Activated T-helper 1 cell treated with anti-CD3 and anti-CD28 coated beads, Interleukin-12 subunit alpha, Interleukin-12 subunit beta, Interleukin-2, Interleukin-4 antibody, amounts not matched to agents 30 ng/mL and 10 ng/mL and 1 ng/mL, durations not matched to agents 14 hours and 24 hours and 36 hours (primary cell): ENCODE measurements at regions of chr16 and their contacts with region 1.

Region 1: DNA sequence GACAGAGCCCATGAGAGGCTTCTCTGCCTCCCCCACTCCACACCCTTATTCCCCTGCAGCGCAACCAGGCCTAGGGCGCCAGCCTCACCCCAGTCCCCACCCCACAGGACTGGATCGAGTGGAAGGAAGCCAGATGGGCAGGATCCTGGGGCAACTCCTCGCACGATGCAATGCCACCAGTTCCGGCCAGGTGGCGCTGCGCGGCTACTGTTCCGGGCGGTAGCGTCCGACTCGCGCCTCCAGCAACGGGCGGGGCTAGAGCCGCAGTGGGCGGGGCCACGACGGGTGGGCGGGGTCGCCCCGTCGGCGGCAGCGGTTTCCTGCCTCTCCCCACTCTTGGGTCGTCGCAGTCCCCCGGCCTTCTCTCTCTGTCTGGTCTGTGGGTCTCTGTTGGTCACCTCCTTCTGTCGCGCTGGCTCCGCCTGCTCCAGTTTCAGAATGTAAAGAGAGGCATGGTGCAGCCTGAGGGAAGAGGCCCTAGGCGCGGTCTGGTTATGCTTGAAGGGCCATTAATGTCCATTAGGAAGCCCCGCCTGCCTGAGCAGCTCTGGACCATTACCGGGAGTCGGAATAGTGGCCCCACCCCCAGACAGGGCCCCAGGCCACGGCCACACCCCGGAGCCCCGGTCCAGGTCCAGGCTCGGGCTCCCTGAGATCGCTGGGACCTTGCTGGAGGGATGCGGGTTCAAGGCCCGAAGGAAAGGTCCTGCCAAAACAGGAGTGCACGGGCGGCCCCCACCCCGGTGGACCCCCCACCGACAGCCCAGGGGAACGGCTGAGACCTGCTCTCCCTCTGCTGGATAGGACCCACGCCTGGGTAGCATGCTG is 3.4 kb upstream of the NHERF2 start:
- DNase-seq: peak; percentile 92
- H3K4me3 Mint-ChIP-seq: peak overlapping the region; percentile 77
- H3K27ac Mint-ChIP-seq: no peak overlapping the region
- H3K4me1 Mint-ChIP-seq: peaks cover 16% of the 10 kb centered on the region
- H3K27me3 Mint-ChIP-seq: peaks cover 37% of the 10 kb centered on the region

Region 2: GRCh38 chr16:1983544-1984346 is 39.6 kb before region 1 on chr16 and contains the start of gene GFER:
- intact Hi-C with region 1: loop called (anchors 5 kb)
- DNase-seq: peak; percentile 80
- H3K4me3 Mint-ChIP-seq: peak within 1 kb of the TSS; percentile 84
- H3K27ac Mint-ChIP-seq: peak within 1 kb of the TSS; percentile 29
- H3K4me1 Mint-ChIP-seq: peaks cover 4% of the 10 kb centered on the region
- H3K27me3 Mint-ChIP-seq: peaks cover 32% of the 10 kb centered on the region
- total RNA-seq, gene GFER: 46.2 and 54.0 TPM in 2 replicates

Region 3: DNA sequence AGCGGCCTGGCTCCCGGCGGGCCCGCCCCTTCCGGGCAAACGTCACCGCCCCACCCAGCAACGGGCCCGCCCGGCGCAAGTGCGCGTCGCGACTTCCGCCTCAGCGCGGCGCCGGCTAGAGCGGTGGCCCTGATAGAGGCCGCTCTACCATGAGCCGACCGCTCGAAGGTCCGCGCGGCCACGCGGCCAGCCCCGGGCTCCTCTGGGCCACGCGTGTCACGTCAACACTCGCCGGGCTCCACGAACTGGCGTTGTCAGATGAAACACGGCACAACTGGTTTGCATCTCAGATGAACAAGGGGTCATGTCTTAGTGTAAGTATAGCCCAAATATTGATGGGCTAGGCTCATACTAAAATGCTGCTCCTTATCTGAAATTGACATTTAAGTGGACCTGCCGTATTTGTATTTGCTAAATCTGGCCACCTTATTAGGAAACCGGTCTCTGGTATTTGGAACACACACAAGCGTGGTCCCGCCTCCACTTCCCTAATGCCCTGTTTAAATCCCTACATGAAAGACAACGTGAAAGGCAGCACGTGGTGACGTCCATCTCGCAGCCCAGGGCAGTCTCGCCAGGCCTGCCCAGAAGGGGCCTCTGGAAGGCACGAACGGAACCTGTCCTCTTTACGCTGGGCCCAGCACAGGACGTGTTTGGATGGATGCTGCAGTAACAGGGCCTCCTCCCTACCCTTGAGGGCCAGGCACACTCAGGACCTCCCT is 13.4 kb before region 1 on chr16 and contains the start of gene ZNF598:
- intact Hi-C with region 1: loop called (anchors 1 kb)
- DNase-seq: peak; percentile 77
- H3K4me3 Mint-ChIP-seq: peak within 1 kb of the TSS; percentile 92
- H3K27ac Mint-ChIP-seq: peak within 1 kb of the TSS; percentile 87
- H3K4me1 Mint-ChIP-seq: peaks cover 26% of the 10 kb centered on the region
- H3K27me3 Mint-ChIP-seq: no peaks in the 10 kb centered on the region
- total RNA-seq, gene ZNF598: 100 and 105 TPM in 2 replicates

Region 4: GRCh38 chr16:2142942-2143877 is 119.9 kb after region 1 on chr16:
- intact Hi-C with region 1: loop called (anchors 1 kb)
- DNase-seq: no peak
- H3K4me3 Mint-ChIP-seq: no peak overlapping the region
- H3K27ac Mint-ChIP-seq: no peak overlapping the region
- H3K4me1 Mint-ChIP-seq: peaks cover 10% of the 10 kb centered on the region
- H3K27me3 Mint-ChIP-seq: peaks cover 15% of the 10 kb centered on the region

Region 5: DNA sequence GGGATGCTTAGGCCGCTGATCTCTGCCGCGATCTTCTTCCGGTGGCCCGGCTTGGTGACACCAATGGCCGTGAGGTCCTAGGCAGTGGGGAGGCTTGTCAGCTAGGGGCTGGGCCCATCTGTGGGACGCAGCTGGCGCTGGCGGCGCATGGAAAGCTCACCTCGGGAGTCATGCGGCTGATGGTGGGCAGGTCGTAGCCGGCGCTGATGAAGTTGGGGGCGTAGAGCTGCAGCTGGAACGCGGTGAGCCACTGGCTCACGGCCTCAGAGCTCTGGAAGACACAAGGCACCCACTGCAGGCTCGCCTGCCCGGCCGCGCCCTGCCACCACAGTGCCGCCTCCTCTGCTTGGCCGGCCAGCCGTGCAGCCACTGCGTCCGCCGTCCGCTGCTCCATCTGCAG is 160.4 kb after region 1 on chr16:
- intact Hi-C with region 1: no loop called
- DNase-seq: no peak
- H3K4me3 Mint-ChIP-seq: no peak overlapping the region
- H3K27ac Mint-ChIP-seq: no peak overlapping the region
- H3K4me1 Mint-ChIP-seq: no peaks in the 10 kb centered on the region
- H3K27me3 Mint-ChIP-seq: no peaks in the 10 kb centered on the region

Region 6: DNA sequence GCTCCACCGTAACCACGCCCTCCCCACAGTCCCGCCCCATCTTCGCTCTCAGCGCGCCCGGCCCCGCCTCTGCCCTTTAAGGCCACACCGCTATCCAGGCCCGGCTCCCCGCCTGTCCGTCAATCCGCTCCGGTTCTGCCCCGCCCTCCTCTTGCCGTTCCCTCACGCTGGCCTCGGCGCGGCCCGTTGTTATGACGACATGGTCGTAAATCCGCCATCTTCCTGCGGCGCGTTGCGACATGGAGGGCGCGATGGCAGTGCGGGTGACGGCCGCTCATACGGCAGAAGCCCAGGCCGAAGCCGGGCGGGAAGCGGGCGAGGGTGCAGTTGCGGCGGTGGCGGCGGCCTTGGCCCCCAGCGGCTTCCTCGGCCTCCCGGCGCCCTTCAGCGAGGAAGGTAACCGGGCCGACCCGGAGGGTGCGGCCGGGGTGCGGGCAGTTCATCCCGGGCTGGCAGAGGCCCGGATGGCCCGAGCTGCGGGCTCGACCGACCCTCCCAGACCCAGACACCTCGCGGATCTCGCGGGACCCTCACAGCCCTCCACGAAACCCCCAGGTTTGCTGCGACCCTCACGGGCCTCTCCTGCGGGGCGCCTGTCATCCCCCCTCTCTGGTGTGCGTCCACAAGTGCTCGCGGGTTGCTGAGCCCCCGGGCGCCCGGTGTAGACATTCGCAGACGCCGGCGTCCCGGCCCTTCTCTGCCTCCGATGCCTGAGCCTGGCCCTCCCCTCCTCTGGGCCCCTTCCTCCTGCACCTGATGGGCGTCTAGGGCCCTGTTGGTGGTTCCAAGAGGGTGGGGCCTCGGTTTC is 200.3 kb after region 1 on chr16 and contains the start of gene E4F1:
- intact Hi-C with region 1: loop called (anchors 1 kb)
- DNase-seq: peak; percentile 99
- H3K4me3 Mint-ChIP-seq: peak within 1 kb of the TSS; percentile 87
- H3K27ac Mint-ChIP-seq: peak within 1 kb of the TSS; percentile 77
- H3K4me1 Mint-ChIP-seq: peaks cover 9% of the 10 kb centered on the region
- H3K27me3 Mint-ChIP-seq: no peaks in the 10 kb centered on the region
- total RNA-seq, gene E4F1: 35.6 and 37.4 TPM in 2 replicates